HEK293 (cell line): ENCODE measurements at regions of chr5 and their contacts with region 1.

Region 1: GRCh38 chr5:88660947-88661805 is 221.8 kb downstream of the MEF2C start:
- H3K4me3 ChIP-seq: peak overlapping the region; percentile 43
- H3K27ac ChIP-seq: peak overlapping the region; percentile 69
- H3K4me1 ChIP-seq: peaks cover 30% of the 10 kb centered on the region
- CTCF ChIP-seq: no peak

Region 2: DNA sequence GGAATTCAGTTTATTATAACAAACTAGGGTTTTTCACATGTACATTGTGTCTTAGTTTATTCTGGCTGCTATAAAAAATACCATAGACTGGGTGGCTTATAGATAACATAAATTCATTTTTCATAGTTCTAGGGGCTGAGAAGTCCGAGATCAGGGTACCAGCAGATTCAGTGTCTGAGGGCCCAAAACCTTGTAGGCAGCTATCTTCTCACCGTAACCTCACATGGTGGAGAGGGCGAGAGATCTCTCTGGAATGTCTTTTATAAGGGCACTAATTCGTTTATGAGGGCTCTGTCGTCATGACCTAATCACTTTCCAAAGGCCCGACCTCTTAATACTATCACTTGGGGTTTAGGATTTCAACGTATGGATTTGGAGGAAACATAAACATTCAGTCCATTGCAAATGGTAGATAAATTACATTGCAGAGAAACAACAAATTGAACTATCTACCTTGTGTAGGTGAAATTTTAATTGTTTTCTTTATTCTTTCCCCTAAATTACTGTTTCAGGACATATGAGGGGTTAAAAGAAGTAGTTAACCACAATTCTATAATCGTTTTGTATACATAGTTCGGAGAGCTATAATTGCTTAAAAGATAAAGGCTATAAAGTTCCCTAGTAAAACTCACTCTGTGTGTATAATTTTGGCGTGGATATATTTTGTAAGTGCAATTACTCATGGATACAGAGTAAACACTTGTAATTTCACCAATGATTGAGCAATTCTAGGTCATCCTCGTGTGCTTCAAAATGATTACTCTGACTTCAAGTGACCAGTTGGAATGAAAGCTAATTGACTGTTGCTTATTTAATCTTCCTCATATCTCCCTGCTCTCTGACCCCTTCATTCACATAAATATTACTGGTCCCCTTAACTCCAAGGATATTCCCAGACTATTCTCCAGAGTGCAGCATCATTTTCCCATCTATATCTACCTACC is 145.0 kb before region 1 on chr5:
- CTCF ChIA-PET with region 1: no interaction called
- POLR2A ChIA-PET with region 1: interaction called, 18 read pairs
- H3K4me3 ChIP-seq: no peak overlapping the region
- H3K27ac ChIP-seq: peak overlapping the region; percentile 76
- H3K4me1 ChIP-seq: peaks cover 10% of the 10 kb centered on the region; the same call in 1 of the 2 replicates
- CTCF ChIP-seq: no peak

Region 3: DNA sequence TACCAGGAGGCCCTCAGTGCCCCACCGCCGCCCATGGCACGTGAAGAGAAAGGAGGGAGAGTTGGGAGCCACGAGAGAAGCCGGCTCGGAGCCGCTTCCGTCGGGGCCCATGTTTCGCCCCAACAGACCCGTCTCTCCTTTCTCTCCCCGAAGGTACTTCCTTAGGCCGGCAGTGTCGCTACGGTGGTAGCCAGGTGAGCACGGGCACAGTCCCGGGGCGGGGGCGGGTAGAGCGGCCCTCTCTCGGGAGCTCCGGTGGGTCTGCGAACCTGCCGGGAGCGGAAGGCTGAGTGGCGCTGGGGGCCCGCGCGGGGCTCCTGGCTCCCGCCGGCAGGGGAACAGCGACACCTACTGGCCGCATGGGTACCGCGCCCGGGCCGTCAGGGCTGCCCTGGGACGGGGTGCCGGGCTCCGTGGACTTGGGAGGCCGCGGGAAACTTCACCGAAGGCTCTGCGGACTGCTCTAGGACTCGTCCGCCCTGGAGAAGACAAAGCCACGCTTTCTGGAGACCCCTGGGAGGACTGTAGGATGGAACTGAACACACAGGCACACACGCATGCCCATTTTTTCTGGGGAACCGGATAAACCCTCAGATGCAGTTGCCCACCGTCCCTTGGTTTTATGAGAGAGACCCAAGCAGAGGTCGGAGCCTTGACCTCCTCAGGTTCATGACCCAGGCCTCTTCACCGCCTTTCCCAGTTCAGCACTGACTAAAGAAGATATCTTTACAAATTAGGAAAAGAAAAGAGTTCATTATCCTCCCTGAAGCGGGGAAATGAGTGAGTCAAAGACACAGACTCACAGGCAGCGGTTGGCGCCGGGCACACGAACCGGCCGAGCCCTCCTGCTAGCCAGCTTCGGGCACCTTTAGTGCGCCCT is 19.3 kb after region 1 on chr5:
- CTCF ChIA-PET with region 1: interaction called, 5 read pairs
- POLR2A ChIA-PET with region 1: interaction called, 30 read pairs
- H3K4me3 ChIP-seq: peak overlapping the region; percentile 35
- H3K27ac ChIP-seq: peak overlapping the region; percentile 80; the same call in 1 of the 2 replicates
- H3K4me1 ChIP-seq: peaks cover 3% of the 10 kb centered on the region
- CTCF ChIP-seq: peak; percentile 95